ENCODE measurements at regions of chr9 and their contacts with region 1.

Region 1: GRCh38 chr9:87547667-87548066 is 50.0 kb downstream of the DAPK1 start:
- DNase-seq: no peak
- H3K4me3 ChIP-seq: no peak overlapping the region
- H3K27ac ChIP-seq: no peak overlapping the region
- H3K4me1 ChIP-seq: peaks cover 24% of the 10 kb centered on the region
- H3K27me3 ChIP-seq: no peaks in the 10 kb centered on the region
- CTCF ChIP-seq: no peak
- POLR2A ChIP-seq: no peak

Region 2: GRCh38 chr9:87557996-87558395 is 10.3 kb after region 1 on chr9:
- CTCF ChIA-PET with region 1: interaction called, 13 read pairs
- POLR2A ChIA-PET with region 1: no interaction called
- dilution Hi-C with region 1: no loop called
- intact Hi-C with region 1: no loop called
- DNase-seq: no peak
- H3K4me3 ChIP-seq: no peak overlapping the region
- H3K27ac ChIP-seq: no peak overlapping the region
- H3K4me1 ChIP-seq: no peaks in the 10 kb centered on the region
- H3K27me3 ChIP-seq: no peaks in the 10 kb centered on the region
- CTCF ChIP-seq: no peak
- POLR2A ChIP-seq: no peak

Region 3: GRCh38 chr9:87569518-87569917 is 21.9 kb after region 1 on chr9:
- CTCF ChIA-PET with region 1: interaction called, 5 read pairs
- POLR2A ChIA-PET with region 1: no interaction called
- dilution Hi-C with region 1: no loop called
- intact Hi-C with region 1: loop called (anchors 2 kb)
- DNase-seq: peak; percentile 95
- H3K4me3 ChIP-seq: peak overlapping the region in 1 of 3 experiments; percentile 21
- H3K27ac ChIP-seq: peak overlapping the region; percentile 19
- H3K4me1 ChIP-seq: peaks cover 30% of the 10 kb centered on the region
- H3K27me3 ChIP-seq: no peaks in the 10 kb centered on the region
- CTCF ChIP-seq: no peak
- POLR2A ChIP-seq: peak; percentile 68

Measured in endothelial cell of umbilical vein (primary cell).